Naive thymus-derived CD8-positive, alpha-beta T cell (primary cell): ENCODE measurements at regions of chr17 and their contacts with region 1.

Region 1: DNA sequence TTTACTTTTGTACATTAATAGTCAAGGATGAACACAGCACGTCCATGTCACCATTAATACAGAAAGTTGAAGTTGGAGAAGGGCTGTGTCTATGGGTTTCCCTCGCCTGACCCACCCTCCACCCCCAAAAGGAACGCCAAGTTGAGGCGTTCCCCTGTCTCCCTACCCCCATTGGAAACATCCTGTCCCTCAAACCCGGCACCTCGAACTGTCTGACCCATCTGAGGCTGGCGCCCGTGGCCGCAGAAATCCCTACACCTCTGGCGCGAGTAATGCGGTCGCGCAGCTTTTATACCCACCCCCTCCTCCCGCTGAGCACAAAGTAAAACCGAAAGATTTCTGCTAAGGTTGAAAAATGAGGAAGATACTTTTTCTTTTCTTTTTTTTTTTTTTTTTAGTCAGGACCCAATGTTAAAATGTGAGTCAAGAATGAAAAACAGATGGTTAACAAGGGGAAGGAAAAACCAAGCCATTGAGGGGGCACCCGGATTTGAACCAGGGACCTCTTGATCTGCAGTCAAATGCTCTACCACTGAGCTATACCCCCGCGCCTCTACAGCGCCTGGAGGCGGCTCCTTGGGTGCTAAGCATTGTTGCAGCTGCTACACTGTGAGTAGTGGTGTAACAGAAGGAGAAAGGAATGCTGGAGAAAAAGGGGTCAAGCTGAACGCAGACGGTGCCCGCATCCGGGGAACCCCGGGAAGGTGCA is 887 bp upstream of the LASP1 start:
- DNase-seq: peak; percentile 69 to 93 (median 90)
- ATAC-seq: peak; percentile 52 to 70
- H3K4me3 Mint-ChIP-seq: peak overlapping the region; percentile 94 to 100 (median 98)
- H3K27ac Mint-ChIP-seq: peak overlapping the region; percentile 92 to 100 (median 96)
- H3K4me1 Mint-ChIP-seq: peaks cover 34 to 55% (median 47%) of the 10 kb centered on the region in 4 donors
- H3K27me3 Mint-ChIP-seq: peaks cover 0 to 1% (median 0%) of the 10 kb centered on the region in 5 donors

Region 2: GRCh38 chr17:38752119-38752929 is 116.6 kb before region 1 on chr17 and contains the start of gene PSMB3:
- POLR2A ChIA-PET with region 1: interaction called, 11 read pairs
- DNase-seq: peak; percentile 85 to 98 (median 96)
- ATAC-seq: peak; percentile 89 to 90
- H3K4me3 Mint-ChIP-seq: peak within 1 kb of the TSS; percentile 87 to 100 (median 99)
- H3K27ac Mint-ChIP-seq: peak within 1 kb of the TSS; percentile 93 to 100 (median 98)
- H3K4me1 Mint-ChIP-seq: peaks cover 22 to 64% (median 59%) of the 10 kb centered on the region in 4 donors
- H3K27me3 Mint-ChIP-seq: peaks cover 1 to 33% (median 14%) of the 10 kb centered on the region in 5 donors
- polyA plus RNA-seq, gene PSMB3: 338 to 361 (median 349) TPM

Region 3: GRCh38 chr17:38809828-38810227 is 59.1 kb before region 1 on chr17:
- POLR2A ChIA-PET with region 1: no interaction called
- DNase-seq: no peak
- ATAC-seq: no peak
- H3K4me3 Mint-ChIP-seq: no peak overlapping the region
- H3K27ac Mint-ChIP-seq: no peak overlapping the region
- H3K4me1 Mint-ChIP-seq: peaks cover 0 to 5% (median 0%) of the 10 kb centered on the region in 4 donors
- H3K27me3 Mint-ChIP-seq: no peaks in the 10 kb centered on the region

Region 4: GRCh38 chr17:38879878-38880682 is 11.1 kb after region 1 on chr17:
- POLR2A ChIA-PET with region 1: interaction called, 113 read pairs
- DNase-seq: peak in 3 of 10 donors; percentile 54 to 70 (median 54)
- ATAC-seq: peak; percentile 24 to 30
- H3K4me3 Mint-ChIP-seq: peak overlapping the region; percentile 56 to 89 (median 79)
- H3K27ac Mint-ChIP-seq: peak overlapping the region; percentile 72 to 96 (median 92)
- H3K4me1 Mint-ChIP-seq: peaks cover 59 to 95% (median 90%) of the 10 kb centered on the region in 4 donors
- H3K27me3 Mint-ChIP-seq: no peaks in the 10 kb centered on the region

Region 5: DNA sequence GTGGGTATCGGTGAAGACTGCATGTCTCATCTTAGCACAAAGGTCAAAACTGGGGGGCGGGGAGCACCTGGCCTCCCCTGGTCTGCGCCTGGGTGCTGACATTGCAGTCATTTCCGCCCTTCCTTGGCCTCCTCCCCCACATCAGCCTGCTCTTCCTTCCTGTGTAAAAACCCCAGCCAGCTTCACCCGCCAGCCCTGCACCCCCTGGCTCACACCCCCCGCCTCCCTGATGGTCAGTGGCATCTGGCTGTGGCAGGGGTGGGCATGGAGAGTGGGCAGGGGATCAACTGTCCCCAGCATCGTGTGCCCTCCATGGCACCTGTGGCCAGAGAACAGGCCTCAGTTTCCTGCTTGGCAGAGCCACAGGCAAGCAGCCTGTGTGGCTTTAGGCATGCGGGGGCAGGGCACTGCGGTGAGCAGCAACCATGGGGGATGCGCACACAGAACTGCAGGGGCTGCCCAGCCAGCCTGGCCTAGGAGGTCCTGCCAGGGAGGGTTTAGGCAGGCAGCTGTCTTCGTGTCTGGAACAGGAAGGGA is 29.9 kb after region 1 on chr17:
- POLR2A ChIA-PET with region 1: interaction called, 159 read pairs
- DNase-seq: peak; percentile 54 to 90 (median 76)
- ATAC-seq: peak; percentile 81 to 90
- H3K4me3 Mint-ChIP-seq: peak overlapping the region; percentile 74 to 93 (median 84)
- H3K27ac Mint-ChIP-seq: peak overlapping the region; percentile 92 to 100 (median 97)
- H3K4me1 Mint-ChIP-seq: peaks cover 22 to 84% (median 70%) of the 10 kb centered on the region in 4 donors
- H3K27me3 Mint-ChIP-seq: no peaks in the 10 kb centered on the region

Region 6: GRCh38 chr17:38967290-38967738 is 98.3 kb after region 1 on chr17 and contains the start of gene FBXO47:
- POLR2A ChIA-PET with region 1: interaction called, 22 read pairs
- DNase-seq: peak; percentile 53 to 94 (median 82)
- ATAC-seq: peak; percentile 98 to 99
- H3K4me3 Mint-ChIP-seq: peak within 1 kb of the TSS; percentile 73 to 89 (median 84)
- H3K27ac Mint-ChIP-seq: peak within 1 kb of the TSS; percentile 72 to 96 (median 90)
- H3K4me1 Mint-ChIP-seq: peaks cover 7 to 20% (median 12%) of the 10 kb centered on the region in 4 donors
- H3K27me3 Mint-ChIP-seq: no peaks in the 10 kb centered on the region
- polyA plus RNA-seq, gene FBXO47: not detected